Left cardiac atrium (tissue), 4 donors: ENCODE measurements at regions of chr7 and their contacts with region 1.

Region 1: GRCh38 chr7:150448789-150449147 is 1.7 kb upstream of the GIMAP8 start:
- DNase-seq: peak; percentile 86
- ATAC-seq: peak; percentile 50 to 64

Region 2: DNA sequence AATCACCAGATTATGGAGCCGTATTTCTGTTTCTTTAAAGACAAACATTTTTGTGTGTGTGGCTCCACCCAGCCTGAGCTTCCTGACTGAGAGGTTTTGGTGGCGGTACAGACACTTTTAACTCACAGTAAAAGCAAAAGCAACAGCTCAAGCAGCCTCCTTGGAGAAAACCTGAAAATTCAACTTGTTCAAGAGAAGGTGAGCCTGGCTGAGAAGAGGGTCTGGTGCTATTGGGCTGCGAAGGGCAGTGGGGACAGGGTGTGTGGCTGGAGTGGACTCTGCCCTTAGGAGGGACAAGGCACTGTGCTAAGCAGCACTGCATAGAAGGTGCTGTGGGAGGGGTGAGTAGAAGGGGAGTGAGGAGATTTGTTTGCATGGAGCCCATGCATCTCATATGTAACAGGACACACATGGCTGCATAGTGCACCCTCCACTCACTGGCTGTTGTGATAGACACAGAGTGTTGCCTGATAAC is 66.0 kb after region 1 on chr7 and contains the start of gene GIMAP7:
- intact Hi-C with region 1: loop called in 1 of 2 experiments (anchors 10 kb)
- DNase-seq: peak; percentile 31
- ATAC-seq: peak; percentile 67 to 80
- total RNA-seq, gene GIMAP7: 25.0 to 26.0 TPM

Region 3: GRCh38 chr7:150567169-150567568 is 118.4 kb after region 1 on chr7 and contains the start of gene GIMAP4:
- intact Hi-C with region 1: loop called in 1 of 2 experiments (anchors 5 kb)
- DNase-seq: no peak
- ATAC-seq: peak; percentile 66 to 67
- total RNA-seq, gene GIMAP4: 30.2 to 40.4 TPM

Region 4: DNA sequence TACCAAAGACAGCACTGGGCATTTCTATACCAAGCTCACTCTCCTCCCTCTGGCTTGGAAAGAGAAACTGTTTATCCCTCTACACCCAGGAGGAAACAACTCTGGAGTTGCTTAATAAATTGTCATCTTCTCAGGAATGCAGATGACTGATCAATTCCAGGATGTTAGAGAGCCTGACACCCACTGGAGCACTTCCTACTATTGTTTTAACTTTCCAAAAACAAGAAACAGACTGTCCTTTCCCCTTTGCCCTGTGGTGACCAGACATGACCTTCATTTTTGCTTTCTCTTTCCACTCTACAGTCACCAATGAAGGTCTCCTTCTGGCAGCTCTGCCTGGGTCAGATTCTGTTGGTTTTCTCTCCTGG is 138.0 kb after region 1 on chr7:
- intact Hi-C with region 1: loop called in 1 of 2 experiments (anchors 5 kb)
- DNase-seq: no peak
- ATAC-seq: peak; percentile 83 to 90

Region 5: DNA sequence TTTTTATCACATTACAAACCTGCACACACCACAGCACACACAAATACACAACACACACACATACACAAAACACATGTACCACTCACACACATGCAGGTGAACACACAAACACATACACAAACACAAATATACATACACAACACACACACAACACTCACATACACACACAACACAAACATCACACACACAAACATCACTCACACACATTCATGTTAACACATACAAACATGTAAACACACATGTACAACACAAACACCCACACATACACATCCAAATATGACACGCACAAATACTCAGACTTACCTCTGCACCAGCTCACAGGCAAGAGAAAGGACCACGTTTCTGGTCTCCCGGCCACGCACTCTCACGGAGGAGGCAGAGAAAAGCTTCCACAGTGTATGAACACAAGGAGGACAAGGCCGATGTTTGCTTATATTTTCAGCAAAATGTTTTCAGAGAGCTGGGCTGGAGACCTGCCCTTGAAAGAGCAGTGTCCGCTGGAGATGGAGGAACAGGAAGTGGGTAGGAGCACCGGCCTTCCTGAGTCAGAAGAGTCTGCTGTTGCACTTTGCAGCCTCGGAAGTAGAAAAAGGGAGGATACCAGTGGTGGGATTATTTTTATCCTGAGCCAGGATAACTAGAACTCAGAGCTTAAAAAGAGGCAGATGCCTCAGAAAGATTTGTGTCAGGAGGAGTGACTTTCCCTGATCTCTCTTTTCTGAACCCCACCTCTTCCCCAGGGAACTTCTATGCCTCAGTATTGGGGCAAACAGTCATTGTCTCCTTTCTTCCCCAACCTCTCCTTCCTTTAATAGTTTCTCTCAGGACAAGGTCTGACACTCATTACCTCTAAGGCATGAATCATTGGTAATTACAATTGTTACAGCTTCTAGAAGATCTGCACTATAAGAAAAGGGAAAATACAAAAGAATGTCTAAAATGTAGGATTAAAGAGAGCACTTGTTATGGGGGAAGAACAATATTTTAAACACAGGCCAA is 183.4 kb after region 1 on chr7 and contains the start of gene GIMAP6:
- intact Hi-C with region 1: loop called in 1 of 2 experiments (anchors 2 kb)
- DNase-seq: peak; percentile 45
- ATAC-seq: peak in 1 of 2 donors; percentile 63
- total RNA-seq, gene GIMAP6: 35.4 to 36.8 TPM

Region 6: GRCh38 chr7:150756858-150757257 is 308.1 kb after region 1 on chr7:
- intact Hi-C with region 1: loop called in 1 of 2 experiments (anchors 2 kb)
- DNase-seq: no peak
- ATAC-seq: no peak